ENCODE measurements at regions of chr20 and their contacts with region 1.

Region 1: GRCh38 chr20:41436679-41437078 is 70.1 kb upstream of the EMILIN3 start:
- DNase-seq: no peak
- H3K4me3 Mint-ChIP-seq: peak overlapping the region; percentile 6
- H3K27ac Mint-ChIP-seq: peak overlapping the region; percentile 38
- H3K4me1 Mint-ChIP-seq: peaks cover 75% of the 10 kb centered on the region
- H3K27me3 Mint-ChIP-seq: no peaks in the 10 kb centered on the region

Region 2: GRCh38 chr20:41003143-41003883 is 433.4 kb before region 1 on chr20:
- intact Hi-C with region 1: loop called (anchors 1 kb)
- DNase-seq: peak; percentile 56
- H3K4me3 Mint-ChIP-seq: peak overlapping the region; percentile 66
- H3K27ac Mint-ChIP-seq: peak overlapping the region; percentile 94
- H3K4me1 Mint-ChIP-seq: peaks cover 42% of the 10 kb centered on the region
- H3K27me3 Mint-ChIP-seq: no peaks in the 10 kb centered on the region

Region 3: GRCh38 chr20:41119546-41120235 is 317.0 kb before region 1 on chr20:
- intact Hi-C with region 1: no loop called
- DNase-seq: no peak
- H3K4me3 Mint-ChIP-seq: no peak overlapping the region
- H3K27ac Mint-ChIP-seq: peak overlapping the region; percentile 13
- H3K4me1 Mint-ChIP-seq: peaks cover 9% of the 10 kb centered on the region
- H3K27me3 Mint-ChIP-seq: no peaks in the 10 kb centered on the region

Region 4: DNA sequence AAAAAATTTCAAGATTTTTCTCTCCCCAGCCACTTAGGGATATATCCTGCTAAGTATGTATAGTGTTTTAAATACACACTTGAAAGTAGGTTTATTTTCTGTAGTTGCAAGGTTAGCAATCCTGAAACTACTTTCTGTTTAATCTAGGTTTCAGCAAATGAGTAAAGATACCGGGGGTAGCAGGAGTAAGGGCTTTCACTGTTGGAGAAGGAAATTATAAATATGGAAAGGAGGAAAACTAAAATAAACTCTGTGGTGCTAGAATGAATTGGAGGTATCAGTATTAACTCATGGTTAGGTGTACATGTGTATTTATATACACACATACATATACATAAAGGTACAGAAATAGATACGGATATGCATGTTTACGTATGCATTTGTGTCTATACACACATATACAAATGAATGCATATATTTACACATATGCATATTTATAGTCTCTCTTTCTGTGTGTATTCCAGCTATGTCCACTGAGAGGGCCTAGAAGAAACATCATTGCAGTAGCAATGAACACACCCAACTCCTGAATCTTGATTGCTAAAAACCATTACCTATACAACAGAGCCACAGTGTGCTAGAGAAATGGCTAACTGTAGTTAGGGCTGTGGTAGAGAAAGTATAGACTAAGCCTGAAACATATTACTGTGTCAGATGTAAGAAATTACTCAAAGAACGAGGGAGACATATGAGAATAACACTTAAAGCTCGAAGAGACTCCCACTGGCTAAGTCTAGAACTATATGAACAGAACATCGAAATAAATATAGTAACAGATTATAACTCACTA is 25.9 kb after region 1 on chr20:
- intact Hi-C with region 1: loop called (anchors 1 kb)
- DNase-seq: no peak
- H3K4me3 Mint-ChIP-seq: no peak overlapping the region
- H3K27ac Mint-ChIP-seq: peak overlapping the region; percentile 0
- H3K4me1 Mint-ChIP-seq: peaks cover 20% of the 10 kb centered on the region
- H3K27me3 Mint-ChIP-seq: no peaks in the 10 kb centered on the region

Region 5: DNA sequence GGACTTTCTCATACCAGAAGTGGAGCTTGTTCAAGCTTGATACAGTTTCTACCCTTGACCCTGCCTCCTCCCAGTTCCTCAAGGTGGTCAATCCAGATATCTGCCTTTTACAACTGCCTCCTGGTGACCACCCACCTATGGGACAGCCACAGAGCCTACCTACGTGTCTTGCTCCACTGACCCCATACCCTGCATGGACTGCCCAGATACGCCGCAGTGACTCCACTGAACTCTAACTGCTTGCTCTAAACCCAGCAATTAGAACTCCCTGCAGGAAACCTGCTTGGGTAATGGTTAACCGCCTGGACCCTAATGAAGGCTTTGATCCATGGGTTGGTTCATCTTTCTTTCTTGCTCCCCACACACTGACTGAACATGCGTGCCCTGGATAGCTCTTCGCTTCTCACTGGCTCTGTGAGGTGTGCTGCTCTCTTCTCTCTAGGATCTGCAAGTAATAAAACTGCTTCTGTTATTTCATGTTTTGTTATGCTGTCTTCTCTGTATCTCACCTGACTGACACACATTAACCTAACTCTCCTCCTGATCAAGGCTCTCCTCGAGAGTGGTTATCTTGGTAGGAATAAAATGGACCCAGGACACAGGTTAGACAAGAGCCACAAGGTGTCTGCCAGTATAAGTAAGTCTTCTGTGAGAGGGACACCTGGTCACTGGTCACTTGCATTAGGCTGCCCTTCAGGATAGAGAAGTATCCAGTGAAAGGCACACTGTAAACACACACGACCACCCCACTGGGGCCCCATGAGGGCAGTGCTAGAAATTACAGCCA is 102.3 kb after region 1 on chr20:
- intact Hi-C with region 1: no loop called
- DNase-seq: no peak
- H3K4me3 Mint-ChIP-seq: no peak overlapping the region
- H3K27ac Mint-ChIP-seq: no peak overlapping the region
- H3K4me1 Mint-ChIP-seq: no peaks in the 10 kb centered on the region
- H3K27me3 Mint-ChIP-seq: no peaks in the 10 kb centered on the region

Region 6: DNA sequence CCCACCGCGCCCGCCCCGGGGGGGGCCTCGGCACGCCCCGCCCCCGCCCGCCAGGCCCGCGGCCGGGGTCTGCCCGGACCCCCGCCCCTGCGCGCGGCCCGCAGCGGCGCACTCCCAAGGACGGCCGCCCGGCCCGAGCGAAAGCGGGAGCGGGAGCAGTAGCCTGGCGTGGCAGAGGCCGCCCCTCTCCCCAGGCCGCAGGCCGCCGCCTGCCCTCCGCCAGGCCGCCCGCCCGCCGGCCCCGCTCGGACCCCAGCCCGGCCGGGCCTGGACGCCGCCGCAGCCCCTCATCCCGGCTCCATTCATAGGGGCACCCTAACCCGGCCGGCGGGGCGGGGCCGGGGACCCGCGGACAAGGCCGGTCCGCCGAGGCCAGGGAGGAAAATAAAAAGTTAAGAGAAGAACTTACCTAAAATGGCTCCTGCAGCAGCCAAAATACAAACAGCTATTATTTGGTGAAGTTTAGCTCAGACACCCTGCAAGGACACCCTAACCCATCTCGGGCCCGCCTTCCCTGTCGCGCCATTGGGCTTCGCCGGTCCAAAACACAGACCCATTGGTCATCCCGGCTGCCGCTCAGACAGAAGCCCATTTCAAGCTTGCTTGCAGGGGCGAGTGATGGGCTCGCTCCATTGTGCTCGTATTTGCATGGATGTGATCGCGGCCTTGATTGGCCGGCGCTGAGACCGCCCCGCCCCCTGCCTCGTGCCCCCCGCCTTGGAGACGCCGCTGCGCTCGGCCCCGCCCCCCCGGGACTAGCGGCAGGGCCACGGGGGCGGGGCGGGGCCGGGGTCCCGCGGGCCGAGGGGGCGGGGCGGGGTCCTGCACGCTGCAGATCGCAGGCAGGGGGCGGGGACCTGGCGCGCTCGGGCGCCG is 181.5 kb after region 1 on chr20 and contains the start of gene CHD6:
- intact Hi-C with region 1: loop called (anchors 2 kb)
- DNase-seq: peak; percentile 99
- H3K4me3 Mint-ChIP-seq: peak within 1 kb of the TSS; percentile 94
- H3K27ac Mint-ChIP-seq: peak within 1 kb of the TSS; percentile 89
- H3K4me1 Mint-ChIP-seq: peaks cover 40% of the 10 kb centered on the region
- H3K27me3 Mint-ChIP-seq: peaks cover 16% of the 10 kb centered on the region
- total RNA-seq, gene CHD6: 34.3 and 36.8 TPM in 2 replicates

Region 7: DNA sequence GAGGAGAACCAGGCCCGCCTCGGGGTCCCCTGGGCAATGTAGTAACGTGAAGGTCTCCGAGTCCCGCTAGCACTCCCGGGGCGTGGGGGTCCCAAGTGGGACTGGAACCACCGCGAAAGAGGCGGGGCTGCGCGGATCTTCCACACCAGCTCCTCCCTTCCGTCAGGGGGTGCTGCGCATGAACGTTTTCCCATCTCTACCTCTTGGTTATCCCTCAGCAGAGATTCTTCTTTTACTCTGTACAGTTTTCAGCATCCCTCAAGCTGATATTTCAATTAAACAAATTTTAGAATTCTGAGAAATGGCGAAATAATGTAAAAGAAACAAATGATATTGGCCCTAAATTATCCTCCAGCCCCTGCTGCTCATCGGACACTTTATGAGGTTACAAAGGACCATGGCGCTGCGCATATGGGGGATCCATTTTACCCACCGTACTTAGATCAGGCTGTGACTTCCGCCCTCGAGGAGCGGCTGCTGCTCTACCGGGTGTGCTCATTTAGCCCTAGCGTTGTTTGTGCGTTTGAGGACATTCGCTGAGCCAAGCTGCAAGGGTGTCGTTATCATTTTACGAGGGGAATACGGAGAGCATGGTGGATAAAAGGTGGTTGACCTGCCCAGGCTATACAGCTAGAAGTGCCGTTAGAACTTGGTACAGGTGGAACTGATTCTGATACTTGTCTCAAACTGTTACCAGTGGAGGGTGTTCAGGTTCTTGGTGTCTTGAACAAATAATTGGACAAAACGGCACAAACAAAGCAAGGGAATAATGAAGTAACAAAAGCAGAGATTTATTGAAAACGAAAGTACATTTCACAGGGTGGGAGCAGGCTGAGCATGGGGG is 256.7 kb after region 1 on chr20:
- intact Hi-C with region 1: loop called (anchors 2 kb)
- DNase-seq: peak; percentile 73
- H3K4me3 Mint-ChIP-seq: peak overlapping the region; percentile 93
- H3K27ac Mint-ChIP-seq: peak overlapping the region; percentile 94
- H3K4me1 Mint-ChIP-seq: peaks cover 13% of the 10 kb centered on the region
- H3K27me3 Mint-ChIP-seq: peaks cover 3% of the 10 kb centered on the region

Measured in activated T-helper 1 cell treated with anti-CD3 and anti-CD28 coated beads, Interleukin-12 subunit alpha, Interleukin-12 subunit beta, Interleukin-2, Interleukin-4 antibody, amounts not matched to agents 30 ng/mL and 10 ng/mL and 1 ng/mL, durations not matched to agents 14 hours and 24 hours and 36 hours (primary cell).